ENCODE measurements at regions of chr7 and their contacts with region 1.

Region 1: DNA sequence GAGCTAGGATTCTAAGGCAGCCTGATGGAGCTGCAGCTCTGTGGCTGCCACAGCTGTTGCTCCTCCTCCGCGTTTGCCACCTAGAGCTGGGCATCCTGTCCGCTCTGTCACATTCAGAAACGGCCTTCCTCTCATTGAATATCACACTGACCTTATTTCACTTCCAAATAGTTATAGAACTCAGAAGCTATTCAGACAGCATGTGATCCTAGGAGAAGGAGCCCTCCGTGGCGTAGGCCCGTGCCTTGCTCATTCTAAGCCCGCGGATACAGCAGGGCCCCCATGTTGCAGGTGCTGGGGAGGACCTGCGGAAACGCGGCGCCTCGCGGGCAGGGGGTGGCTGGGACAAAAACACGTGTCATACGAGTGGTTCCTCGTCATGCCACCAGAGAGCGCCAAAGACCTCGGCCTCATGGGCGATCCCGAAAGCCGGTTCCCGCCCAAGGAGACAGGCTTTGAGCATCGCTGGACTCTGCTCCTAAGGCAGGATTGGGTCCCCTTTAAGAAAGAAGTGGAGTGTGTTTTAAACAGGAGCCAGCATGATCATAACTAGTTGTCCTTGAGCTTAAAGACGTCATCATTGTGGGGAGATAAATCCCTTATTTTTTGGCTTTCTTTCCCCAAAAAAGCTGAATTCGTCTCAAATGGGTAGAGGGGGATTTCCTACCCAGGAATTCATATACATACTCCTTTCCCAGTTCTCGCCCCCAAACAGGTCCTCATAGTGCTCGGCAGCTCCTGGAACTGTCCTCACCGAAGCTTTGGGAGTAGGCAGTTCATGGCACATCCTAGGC is 17.9 kb upstream of the FIGNL1 start:
- DNase-seq: peak; percentile 24
- H3K4me3 ChIP-seq: no peak overlapping the region
- H3K27ac ChIP-seq: no peak overlapping the region
- H3K27me3 ChIP-seq: peaks cover 15% of the 10 kb centered on the region
- CTCF ChIP-seq: peak; percentile 88

Region 2: GRCh38 chr7:50270531-50271018 is 197.4 kb before region 1 on chr7:
- CTCF ChIA-PET with region 1: no interaction called
- POLR2A ChIA-PET with region 1: no interaction called
- DNase-seq: no peak
- H3K4me3 ChIP-seq: no peak overlapping the region
- H3K27ac ChIP-seq: no peak overlapping the region
- H3K27me3 ChIP-seq: no peaks in the 10 kb centered on the region
- CTCF ChIP-seq: no peak

Region 3: GRCh38 chr7:50486512-50486911 is 18.5 kb after region 1 on chr7:
- CTCF ChIA-PET with region 1: interaction called, 10 read pairs
- POLR2A ChIA-PET with region 1: no interaction called
- DNase-seq: no peak
- H3K4me3 ChIP-seq: no peak overlapping the region
- H3K27ac ChIP-seq: no peak overlapping the region
- H3K27me3 ChIP-seq: no peaks in the 10 kb centered on the region
- CTCF ChIP-seq: no peak

Region 4: DNA sequence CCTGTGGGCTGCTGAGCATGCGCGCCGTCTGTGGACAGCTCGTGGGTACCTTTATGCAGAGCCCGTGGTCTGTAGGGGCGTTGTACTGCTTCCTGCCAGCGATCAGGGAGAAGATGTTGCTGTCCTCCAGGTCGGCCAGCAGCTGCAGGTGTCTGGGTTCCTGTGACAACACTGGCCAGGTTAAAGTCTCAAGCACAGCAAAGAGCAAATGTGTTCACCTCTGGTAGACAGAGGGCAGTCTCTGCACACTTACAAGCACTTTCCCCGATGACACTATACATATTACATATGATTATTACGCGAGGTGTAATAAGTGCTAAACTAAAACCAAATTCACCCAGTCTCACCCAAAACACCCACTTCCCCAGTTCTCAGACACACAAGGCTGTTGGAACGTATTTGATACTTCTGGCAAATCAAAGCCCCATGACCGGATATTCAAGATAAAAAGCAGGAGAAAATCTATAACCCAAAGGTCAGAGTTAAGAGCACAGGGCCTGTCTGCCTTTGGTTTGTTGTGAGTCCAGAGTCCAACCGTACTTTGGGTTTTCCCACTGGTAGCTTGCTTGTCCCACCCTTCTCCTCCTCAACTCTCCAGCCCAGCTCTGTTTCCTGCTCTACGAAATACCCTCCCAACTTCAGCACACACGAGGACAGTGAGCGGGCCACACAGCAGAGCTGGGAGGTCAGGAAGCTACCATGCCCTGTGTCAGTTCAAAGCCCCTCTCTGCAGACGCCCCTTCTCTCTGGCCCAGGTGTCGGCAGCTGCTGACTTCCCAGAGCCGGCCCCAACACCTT is 146.9 kb after region 1 on chr7:
- CTCF ChIA-PET with region 1: interaction called, 12 read pairs
- POLR2A ChIA-PET with region 1: no interaction called
- DNase-seq: no peak
- H3K4me3 ChIP-seq: no peak overlapping the region
- H3K27ac ChIP-seq: no peak overlapping the region
- H3K27me3 ChIP-seq: no peaks in the 10 kb centered on the region
- CTCF ChIP-seq: 0 out of 2 replicates have a peak, but pooled peaks have one; percentile 2

Region 5: GRCh38 chr7:50632561-50633413 is 164.8 kb after region 1 on chr7:
- CTCF ChIA-PET with region 1: interaction called, 27 read pairs
- POLR2A ChIA-PET with region 1: no interaction called
- DNase-seq: no peak
- H3K4me3 ChIP-seq: no peak overlapping the region
- H3K27ac ChIP-seq: no peak overlapping the region
- H3K27me3 ChIP-seq: no peaks in the 10 kb centered on the region
- CTCF ChIP-seq: peak; percentile 87

Region 6: GRCh38 chr7:50679218-50680007 is 211.4 kb after region 1 on chr7:
- CTCF ChIA-PET with region 1: interaction called, 24 read pairs
- POLR2A ChIA-PET with region 1: no interaction called
- DNase-seq: no peak
- H3K4me3 ChIP-seq: no peak overlapping the region
- H3K27ac ChIP-seq: no peak overlapping the region
- H3K27me3 ChIP-seq: no peaks in the 10 kb centered on the region
- CTCF ChIP-seq: peak; percentile 40

Region 7: GRCh38 chr7:51067757-51068156 is 599.7 kb after region 1 on chr7:
- CTCF ChIA-PET with region 1: interaction called, 10 read pairs
- POLR2A ChIA-PET with region 1: no interaction called
- DNase-seq: peak; percentile 45
- H3K4me3 ChIP-seq: no peak overlapping the region
- H3K27ac ChIP-seq: no peak overlapping the region
- H3K27me3 ChIP-seq: peaks cover 12% of the 10 kb centered on the region
- CTCF ChIP-seq: peak; percentile 83

Region 8: DNA sequence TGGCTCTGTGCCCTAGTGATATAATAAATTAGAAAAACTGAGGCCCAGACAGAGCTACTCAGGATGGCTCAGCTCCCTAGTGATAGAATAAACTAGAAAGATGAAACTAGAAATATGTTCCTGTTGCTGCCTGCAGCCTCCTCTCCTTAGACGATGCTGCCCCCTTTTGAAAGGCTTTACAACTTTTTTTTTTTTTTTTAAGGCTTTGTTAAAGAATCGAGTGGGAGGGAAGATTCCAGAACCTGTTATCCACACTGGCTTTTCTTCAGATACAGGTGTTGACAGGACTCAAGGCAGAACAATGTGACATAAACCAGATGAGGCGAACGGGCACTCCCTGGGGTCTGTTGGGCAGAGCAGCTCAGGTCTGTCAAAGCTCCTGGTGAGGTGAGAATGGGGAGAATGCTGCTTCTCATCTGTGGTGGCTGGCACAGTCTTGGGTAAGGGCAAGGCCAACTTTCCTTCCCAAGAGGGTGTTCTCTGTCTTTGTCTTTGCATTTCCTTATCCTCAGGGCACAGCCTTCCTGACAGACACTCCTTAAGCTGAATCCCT is 673.5 kb after region 1 on chr7:
- CTCF ChIA-PET with region 1: interaction called, 73 read pairs
- POLR2A ChIA-PET with region 1: no interaction called
- DNase-seq: peak; percentile 1
- H3K4me3 ChIP-seq: no peak overlapping the region
- H3K27ac ChIP-seq: no peak overlapping the region
- H3K27me3 ChIP-seq: peaks cover 2% of the 10 kb centered on the region
- CTCF ChIP-seq: peak; percentile 74